ENCODE measurements at regions of chr4 and their contacts with region 1.

Region 1: DNA sequence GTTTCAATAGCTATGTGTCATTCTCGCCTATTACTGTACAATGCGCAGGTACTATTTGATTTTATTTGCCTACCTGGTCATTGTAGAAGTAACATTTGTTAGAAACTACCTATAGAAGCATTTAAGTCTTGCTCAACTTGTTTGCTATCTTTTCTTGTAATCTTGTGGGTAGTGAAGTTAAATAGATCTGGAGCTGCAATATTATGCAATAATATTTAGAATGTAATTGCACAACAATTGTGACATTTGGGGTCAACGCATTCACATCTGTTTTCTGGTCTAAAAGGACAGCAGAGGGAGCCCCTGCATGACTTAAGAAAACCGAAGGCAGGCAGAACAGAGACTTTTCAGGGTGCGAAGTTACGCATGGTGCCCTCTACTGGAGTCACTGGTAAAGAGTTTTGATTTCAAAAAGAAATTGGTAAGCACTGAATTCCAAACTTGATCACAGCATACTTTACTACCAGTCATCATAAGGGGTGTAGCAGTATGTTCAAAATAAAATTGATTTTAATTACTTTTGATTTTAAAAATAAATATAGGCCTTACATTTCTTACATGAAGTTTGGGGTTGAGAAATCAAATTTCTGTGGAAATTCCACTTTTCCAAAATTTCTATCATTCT is 503.2 kb upstream of the FAM241A start:
- DNase-seq: peak; percentile 48
- H3K4me3 ChIP-seq: no peak overlapping the region
- H3K27ac ChIP-seq: no peak overlapping the region
- H3K4me1 ChIP-seq: no peaks in the 10 kb centered on the region
- H3K27me3 ChIP-seq: no peaks in the 10 kb centered on the region
- CTCF ChIP-seq: peak; percentile 62

Region 2: GRCh38 chr4:111483375-111484169 is 158.5 kb before region 1 on chr4:
- intact Hi-C with region 1: no loop called
- DNase-seq: no peak
- H3K4me3 ChIP-seq: no peak overlapping the region
- H3K27ac ChIP-seq: no peak overlapping the region
- H3K4me1 ChIP-seq: no peaks in the 10 kb centered on the region
- H3K27me3 ChIP-seq: no peaks in the 10 kb centered on the region
- CTCF ChIP-seq: no peak

Region 3: GRCh38 chr4:111562826-111563225 is 79.2 kb before region 1 on chr4:
- intact Hi-C with region 1: no loop called
- DNase-seq: no peak
- H3K4me3 ChIP-seq: no peak overlapping the region
- H3K27ac ChIP-seq: no peak overlapping the region
- H3K4me1 ChIP-seq: no peaks in the 10 kb centered on the region
- H3K27me3 ChIP-seq: no peaks in the 10 kb centered on the region
- CTCF ChIP-seq: no peak

Region 4: GRCh38 chr4:111854494-111855087 is 212.5 kb after region 1 on chr4:
- intact Hi-C with region 1: loop called (anchors 5 kb)
- DNase-seq: peak; percentile 20
- H3K4me3 ChIP-seq: no peak overlapping the region
- H3K27ac ChIP-seq: no peak overlapping the region
- H3K4me1 ChIP-seq: no peaks in the 10 kb centered on the region
- H3K27me3 ChIP-seq: no peaks in the 10 kb centered on the region
- CTCF ChIP-seq: peak; percentile 44

Region 5: GRCh38 chr4:111943795-111944203 is 301.7 kb after region 1 on chr4:
- intact Hi-C with region 1: loop called (anchors 10 kb)
- DNase-seq: peak; percentile 53
- H3K4me3 ChIP-seq: no peak overlapping the region
- H3K27ac ChIP-seq: no peak overlapping the region
- H3K4me1 ChIP-seq: no peaks in the 10 kb centered on the region
- H3K27me3 ChIP-seq: no peaks in the 10 kb centered on the region
- CTCF ChIP-seq: peak; percentile 57

Region 6: DNA sequence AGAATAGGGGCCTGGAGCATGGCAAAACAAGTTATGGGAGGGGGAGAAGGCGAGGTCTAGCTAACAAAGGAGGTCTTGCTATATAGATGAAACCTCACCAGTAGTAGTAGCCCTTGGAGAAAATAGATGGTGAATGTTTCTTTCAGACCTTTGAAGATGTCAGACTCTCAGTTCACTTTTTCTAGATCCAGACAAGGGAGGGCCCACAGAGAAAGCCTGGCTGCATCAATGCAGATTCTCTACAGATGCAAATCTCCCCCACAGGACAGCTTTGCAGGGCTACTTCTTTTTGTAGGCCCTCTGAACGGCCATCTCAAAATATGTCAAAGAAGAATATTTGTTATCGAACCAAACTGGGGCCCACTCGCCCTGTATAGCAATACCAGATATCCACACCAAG is 1567.1 kb after region 1 on chr4:
- intact Hi-C with region 1: no loop called
- DNase-seq: no peak
- H3K4me3 ChIP-seq: no peak overlapping the region
- H3K27ac ChIP-seq: no peak overlapping the region
- H3K4me1 ChIP-seq: no peaks in the 10 kb centered on the region
- H3K27me3 ChIP-seq: no peaks in the 10 kb centered on the region
- CTCF ChIP-seq: no peak